MCF 10A (cell line): ENCODE measurements at regions of chr2 and their contacts with region 1.

Region 1: GRCh38 chr2:69386789-69387734 is at the start of gene GFPT1:
- DNase-seq: peak; percentile 90
- H3K4me3 Mint-ChIP-seq: peak within 1 kb of the TSS; percentile 90
- H3K27ac Mint-ChIP-seq: peak within 1 kb of the TSS; percentile 96
- H3K4me1 Mint-ChIP-seq: peaks cover 35% of the 10 kb centered on the region
- H3K27me3 Mint-ChIP-seq: no peaks in the 10 kb centered on the region
- CTCF ChIP-seq: no peak
- total RNA-seq, gene GFPT1: 176 and 230 TPM in 2 replicates

Region 2: DNA sequence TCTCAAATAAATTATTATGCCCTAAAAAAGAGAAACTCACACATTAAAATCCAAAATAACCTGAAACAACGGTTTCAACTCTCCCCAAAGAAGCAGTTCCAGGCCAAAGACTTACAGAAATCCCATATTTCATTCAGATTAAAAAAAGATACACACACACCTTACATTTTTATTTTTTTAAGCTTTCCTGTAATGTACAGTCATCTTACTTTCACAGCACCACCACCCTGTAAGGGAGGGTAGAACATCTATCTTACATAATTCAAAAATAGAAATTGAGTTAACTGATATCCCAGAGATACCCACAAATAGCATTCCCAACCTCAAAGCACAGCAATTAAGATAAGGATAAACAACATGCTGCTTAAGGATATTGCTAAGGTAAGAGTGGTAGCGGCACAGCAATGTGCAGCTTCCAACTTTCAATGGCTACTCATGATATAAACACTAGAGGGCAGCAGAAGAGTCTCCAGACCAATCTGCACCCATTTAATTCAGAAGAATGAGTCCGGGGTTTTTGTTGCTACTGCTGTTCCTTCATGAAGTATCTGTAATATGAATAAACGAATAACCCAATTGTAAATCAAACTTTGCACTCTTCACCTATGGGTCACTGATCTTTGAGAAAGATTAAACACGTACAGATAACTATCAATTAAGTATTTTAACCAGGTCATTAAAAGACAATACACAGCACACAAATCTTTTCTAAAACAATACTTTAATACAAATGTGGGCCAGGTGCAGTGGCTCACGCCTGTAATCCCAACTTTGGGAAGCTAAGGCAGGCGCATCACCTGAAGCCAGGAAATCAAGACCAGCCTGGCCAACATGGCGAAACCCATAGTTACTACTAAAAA is 11.3 kb before region 1 on chr2:
- CTCF ChIA-PET with region 1: interaction called, 14 read pairs
- POLR2A ChIA-PET with region 1: interaction called, 6 read pairs
- intact Hi-C with region 1: no loop called
- DNase-seq: peak; percentile 49
- H3K4me3 Mint-ChIP-seq: no peak overlapping the region
- H3K27ac Mint-ChIP-seq: no peak overlapping the region
- H3K4me1 Mint-ChIP-seq: peaks cover 16% of the 10 kb centered on the region
- H3K27me3 Mint-ChIP-seq: no peaks in the 10 kb centered on the region
- CTCF ChIP-seq: peak; percentile 40

Region 3: DNA sequence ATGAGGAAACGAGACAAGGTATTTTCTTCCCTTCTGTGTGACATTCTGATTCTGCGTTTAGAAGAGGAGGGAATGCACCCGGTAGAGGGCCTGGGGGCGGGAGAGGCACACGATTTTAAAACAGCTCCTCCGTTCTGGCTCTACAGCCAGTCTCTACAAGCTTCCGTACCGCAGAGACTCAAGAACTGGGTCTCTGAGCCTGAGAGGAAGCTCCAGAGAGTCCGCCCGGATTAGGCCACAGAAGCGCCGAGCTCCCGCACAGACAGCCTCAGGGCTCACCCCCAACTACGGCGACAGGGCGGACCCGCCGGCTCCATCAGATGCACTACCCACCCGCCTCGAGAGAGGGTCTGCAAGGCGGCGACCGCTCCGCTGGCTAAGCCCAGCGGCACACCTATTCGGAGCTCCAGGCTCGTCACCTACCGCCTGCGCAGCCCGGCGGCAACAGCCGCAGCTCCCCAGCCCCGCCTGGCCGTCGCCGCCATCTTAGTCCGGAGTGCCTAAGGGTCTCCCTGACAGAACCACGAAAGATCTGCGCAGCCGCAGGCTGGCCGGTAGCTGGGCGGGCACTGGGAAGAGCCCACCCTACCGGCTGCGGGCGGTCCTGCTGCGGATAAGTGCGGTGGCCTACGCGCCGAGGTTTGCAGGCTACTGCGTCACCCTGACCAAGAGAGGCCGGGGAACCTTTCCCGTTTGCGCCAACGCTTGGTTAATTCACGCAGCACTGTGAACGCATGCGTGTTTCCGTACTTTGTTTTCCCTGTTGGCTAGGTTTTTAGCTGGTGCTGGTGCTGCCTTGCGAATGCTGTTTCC is 50.1 kb after region 1 on chr2 and contains the start of gene NFU1:
- CTCF ChIA-PET with region 1: interaction called, 7 read pairs
- POLR2A ChIA-PET with region 1: interaction called, 32 read pairs
- intact Hi-C with region 1: no loop called
- DNase-seq: peak; percentile 86
- H3K4me3 Mint-ChIP-seq: peak within 1 kb of the TSS; percentile 81
- H3K27ac Mint-ChIP-seq: peak within 1 kb of the TSS; percentile 99
- H3K4me1 Mint-ChIP-seq: peaks cover 13% of the 10 kb centered on the region
- H3K27me3 Mint-ChIP-seq: no peaks in the 10 kb centered on the region
- CTCF ChIP-seq: peak; percentile 19
- total RNA-seq, gene NFU1: 29.5 and 32.3 TPM in 2 replicates